ENCODE measurements at regions of chr2 and their contacts with region 1.

Region 1: DNA sequence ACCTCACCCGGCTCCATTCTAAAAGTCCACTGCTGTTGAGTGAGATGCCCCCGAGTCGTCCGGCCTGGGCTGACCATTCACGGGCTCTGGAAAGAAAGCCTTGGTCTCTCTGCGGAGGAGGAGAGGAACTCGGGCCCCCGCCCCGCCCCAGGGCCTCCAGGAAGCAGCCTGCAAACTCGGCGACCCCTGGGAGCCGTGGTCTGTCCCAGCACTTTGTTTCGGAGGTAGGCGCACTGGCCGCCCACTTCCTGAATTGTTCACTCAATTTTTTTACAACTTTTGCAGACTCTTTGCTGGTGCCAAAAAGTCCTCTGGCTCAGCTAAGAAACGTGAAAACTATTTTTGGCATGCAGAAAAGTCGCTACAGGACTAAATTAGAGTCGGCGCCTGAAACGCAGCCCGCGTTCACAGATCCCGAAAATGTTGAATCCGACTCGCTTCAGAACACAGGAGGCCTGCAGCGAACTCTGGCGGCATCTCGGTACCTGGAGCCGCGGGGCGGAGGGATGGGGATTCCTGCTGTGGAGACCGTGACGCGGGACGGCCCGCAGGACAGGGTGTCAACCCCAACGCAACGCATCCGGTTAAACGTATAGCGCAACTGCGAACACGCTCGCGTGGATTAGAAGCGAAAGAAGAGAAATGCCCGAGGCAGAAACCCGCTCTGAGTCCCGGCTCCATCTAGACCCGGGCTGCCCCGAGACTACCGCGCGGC is 1.5 kb downstream of the PXDN start:
- DNase-seq: peak; percentile 90
- H3K4me3 ChIP-seq: peak overlapping the region; percentile 64 to 72 (median 71)
- H3K27ac ChIP-seq: peak overlapping the region; percentile 81
- H3K4me1 ChIP-seq: peaks cover 16% of the 10 kb centered on the region
- H3K27me3 ChIP-seq: no peaks in the 10 kb centered on the region
- CTCF ChIP-seq: peak; percentile 52 to 75

Region 2: DNA sequence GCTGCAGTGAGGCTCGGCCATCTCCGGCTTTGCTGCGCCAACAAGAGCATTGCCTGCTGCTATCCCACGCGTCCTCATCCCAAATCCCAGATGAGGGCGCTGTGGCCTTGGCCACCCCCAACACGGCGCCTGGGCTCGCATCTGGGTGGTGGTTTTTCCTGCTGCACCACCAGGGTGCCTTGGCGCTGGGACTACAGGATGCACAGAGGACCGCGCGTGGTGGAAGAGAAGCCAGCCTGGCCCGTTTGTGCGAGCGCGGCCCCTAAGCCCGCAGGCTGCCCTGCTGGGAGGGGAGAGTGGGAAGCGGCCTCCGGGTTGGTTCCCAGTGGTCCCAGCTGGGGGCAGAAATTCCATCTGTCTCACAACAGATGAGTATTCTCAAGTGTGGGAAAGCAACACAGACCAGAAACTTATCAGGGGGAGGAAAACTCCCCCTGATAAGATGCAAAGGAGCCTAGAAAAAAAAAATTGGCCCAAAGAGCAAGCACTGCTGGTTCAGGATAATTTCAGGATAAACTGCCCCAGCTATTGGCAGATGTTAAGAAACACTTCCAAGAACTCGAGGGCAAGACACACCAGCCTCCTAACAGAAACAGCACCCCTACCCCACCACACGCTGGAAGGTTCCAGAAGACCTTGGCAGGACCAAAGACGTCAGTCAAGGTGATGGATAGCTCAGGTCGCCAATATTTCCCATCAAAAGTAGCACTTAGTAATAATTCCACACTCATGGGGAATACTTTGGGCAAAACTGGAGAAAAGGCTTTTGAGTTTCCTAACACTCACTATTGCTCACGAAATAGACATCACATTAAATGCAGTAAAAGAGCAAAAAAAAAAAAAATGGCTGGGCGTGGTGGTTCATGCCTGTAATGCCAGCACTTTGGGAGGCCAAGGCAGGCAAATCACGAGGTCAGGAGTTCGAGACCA is 150.6 kb before region 1 on chr2:
- CTCF ChIA-PET with region 1: no interaction called
- dilution Hi-C with region 1: no loop called
- in situ Hi-C with region 1: loop called in 1 of 2 experiments (anchors 10 kb)
- intact Hi-C with region 1: loop called (anchors 2 kb)
- DNase-seq: peak; percentile 31
- H3K4me3 ChIP-seq: no peak overlapping the region
- H3K27ac ChIP-seq: no peak overlapping the region
- H3K4me1 ChIP-seq: peaks cover 41% of the 10 kb centered on the region
- H3K27me3 ChIP-seq: no peaks in the 10 kb centered on the region
- CTCF ChIP-seq: peak in 1 of 2 donors; percentile 23

Region 3: DNA sequence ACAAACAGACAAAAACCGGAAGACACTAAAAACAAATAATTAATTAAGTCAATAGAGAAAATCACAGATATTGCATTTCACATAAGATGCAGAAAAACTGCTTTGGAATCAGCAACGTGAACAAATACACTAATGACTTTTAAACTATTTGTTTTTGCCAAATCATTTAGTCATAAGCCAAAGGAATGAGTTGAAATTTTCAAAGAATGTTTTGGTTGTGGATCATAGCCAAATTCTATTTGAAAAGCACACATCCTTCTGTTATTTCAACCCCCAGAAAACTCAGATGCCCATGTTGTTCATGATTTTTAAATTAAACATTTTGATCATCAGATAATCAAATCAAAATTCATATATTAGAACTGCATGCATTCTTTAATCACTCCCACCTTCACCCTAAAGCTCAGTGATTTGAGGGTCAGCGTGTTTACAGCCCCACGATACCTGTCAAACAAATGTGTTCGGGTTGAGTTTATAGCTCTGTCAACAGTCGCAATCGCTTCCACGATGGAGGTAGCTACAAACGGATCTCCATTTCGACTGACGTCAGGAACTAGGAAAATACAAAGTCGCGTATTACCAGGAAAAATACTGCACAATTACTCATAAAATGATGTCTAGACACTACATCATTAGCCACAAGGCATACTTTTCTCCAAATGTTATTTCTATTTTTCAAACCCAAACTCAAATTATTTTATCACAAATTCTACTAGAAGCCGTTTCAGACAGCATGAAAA is 88.7 kb before region 1 on chr2:
- CTCF ChIA-PET with region 1: no interaction called
- dilution Hi-C with region 1: no loop called
- in situ Hi-C with region 1: no loop called
- intact Hi-C with region 1: loop called (anchors 2 kb)
- DNase-seq: no peak
- H3K4me3 ChIP-seq: no peak overlapping the region
- H3K27ac ChIP-seq: peak overlapping the region; percentile 60
- H3K4me1 ChIP-seq: peaks cover 31% of the 10 kb centered on the region
- H3K27me3 ChIP-seq: no peaks in the 10 kb centered on the region
- CTCF ChIP-seq: no peak

Region 4: GRCh38 chr2:1707771-1708418 is 34.9 kb before region 1 on chr2:
- CTCF ChIA-PET with region 1: no interaction called
- dilution Hi-C with region 1: no loop called
- in situ Hi-C with region 1: no loop called
- intact Hi-C with region 1: loop called (anchors 2 kb)
- DNase-seq: peak; percentile 99
- H3K4me3 ChIP-seq: peak overlapping the region in 2 of 3 experiments; percentile 4 to 26
- H3K27ac ChIP-seq: peak overlapping the region; percentile 97
- H3K4me1 ChIP-seq: peaks cover 45% of the 10 kb centered on the region
- H3K27me3 ChIP-seq: no peaks in the 10 kb centered on the region
- CTCF ChIP-seq: no peak

Region 5: GRCh38 chr2:1817256-1818051 is 74.6 kb after region 1 on chr2:
- CTCF ChIA-PET with region 1: no interaction called
- dilution Hi-C with region 1: no loop called
- in situ Hi-C with region 1: no loop called
- intact Hi-C with region 1: loop called (anchors 2 kb)
- DNase-seq: peak; percentile 81
- H3K4me3 ChIP-seq: no peak overlapping the region
- H3K27ac ChIP-seq: no peak overlapping the region
- H3K4me1 ChIP-seq: peaks cover 8% of the 10 kb centered on the region
- H3K27me3 ChIP-seq: no peaks in the 10 kb centered on the region
- CTCF ChIP-seq: peak; percentile 89 to 98